ENCODE measurements at regions of chr1 and their contacts with region 1.

Region 1: GRCh38 chr1:116504308-116505156 is 66.3 kb downstream of the CD58 start:
- DNase-seq: peak; percentile 49 to 86 (median 73)
- ATAC-seq: peak; percentile 96
- H3K4me3 ChIP-seq: peak overlapping the region; percentile 1
- H3K4me3 Mint-ChIP-seq: peak overlapping the region in 8 of 10 donors; percentile 11 to 77 (median 48)
- H3K27ac ChIP-seq: peak overlapping the region; percentile 48
- H3K27ac Mint-ChIP-seq: peak overlapping the region; percentile 65 to 92 (median 77)
- H3K4me1 ChIP-seq: peaks cover 20 to 49% of the 10 kb centered on the region in 2 donors
- H3K4me1 Mint-ChIP-seq: peaks cover 21 to 89% (median 34%) of the 10 kb centered on the region in 7 donors
- H3K27me3 ChIP-seq: no peaks in the 10 kb centered on the region
- H3K27me3 Mint-ChIP-seq: no peaks in the 10 kb centered on the region

Region 2: GRCh38 chr1:115642168-115643072 is 862.1 kb before region 1 on chr1:
- CTCF ChIA-PET with region 1: no interaction called
- POLR2A ChIA-PET with region 1: no interaction called
- intact Hi-C with region 1: loop called in 1 of 2 experiments (anchors 10 kb)
- DNase-seq: peak in 3 of 9 donors; percentile 7 to 53 (median 15)
- ATAC-seq: peak; percentile 59
- H3K4me3 ChIP-seq: peak overlapping the region; percentile 47
- H3K4me3 Mint-ChIP-seq: peak overlapping the region; percentile 71 to 88 (median 80)
- H3K27ac ChIP-seq: no peak overlapping the region
- H3K27ac Mint-ChIP-seq: peak overlapping the region in 2 of 9 donors; percentile 32 to 72
- H3K4me1 ChIP-seq: peaks cover 0 to 7% of the 10 kb centered on the region in 2 donors
- H3K4me1 Mint-ChIP-seq: peaks cover 10 to 18% (median 14%) of the 10 kb centered on the region in 7 donors
- H3K27me3 ChIP-seq: peaks cover 0 to 4% of the 10 kb centered on the region in 2 donors
- H3K27me3 Mint-ChIP-seq: peaks cover 20 to 49% (median 35%) of the 10 kb centered on the region in 5 donors

Region 3: DNA sequence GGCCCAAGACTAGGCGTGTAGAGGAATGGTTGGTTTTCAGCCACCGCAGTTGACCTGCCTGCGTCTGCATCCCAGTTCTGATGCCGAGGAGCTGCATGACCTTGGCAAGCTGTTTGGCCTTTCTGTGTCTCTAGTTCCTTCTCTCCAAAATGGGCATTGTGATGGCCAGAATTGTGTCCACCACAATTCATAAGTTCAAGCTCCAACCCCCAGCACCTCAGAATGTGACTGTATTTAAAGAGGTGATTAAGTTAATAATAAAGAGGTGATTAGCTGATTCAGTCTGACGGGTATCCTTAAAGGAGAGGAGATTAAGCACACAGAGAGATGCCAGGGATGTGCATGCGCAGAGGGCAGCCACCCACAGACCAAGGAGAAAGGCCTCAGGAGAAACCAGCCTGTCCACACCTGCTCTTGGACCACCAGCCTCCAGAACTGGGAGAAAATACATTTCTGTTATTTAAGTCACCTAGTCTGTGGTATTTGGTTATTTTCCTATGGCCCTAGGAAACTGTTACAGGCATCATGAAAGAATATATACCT is 364.9 kb before region 1 on chr1:
- CTCF ChIA-PET with region 1: interaction called, 59 read pairs
- POLR2A ChIA-PET with region 1: interaction called, 8 read pairs
- intact Hi-C with region 1: loop called (anchors 1 kb)
- DNase-seq: no peak
- ATAC-seq: no peak
- H3K4me3 ChIP-seq: no peak overlapping the region
- H3K4me3 Mint-ChIP-seq: no peak overlapping the region
- H3K27ac ChIP-seq: no peak overlapping the region
- H3K27ac Mint-ChIP-seq: no peak overlapping the region
- H3K4me1 ChIP-seq: no peaks in the 10 kb centered on the region
- H3K4me1 Mint-ChIP-seq: peaks cover 0 to 10% (median 5%) of the 10 kb centered on the region in 7 donors
- H3K27me3 ChIP-seq: no peaks in the 10 kb centered on the region
- H3K27me3 Mint-ChIP-seq: peaks cover 0 to 26% (median 5%) of the 10 kb centered on the region in 5 donors

Region 4: GRCh38 chr1:116436611-116436970 is 67.9 kb before region 1 on chr1:
- CTCF ChIA-PET with region 1: no interaction called
- POLR2A ChIA-PET with region 1: no interaction called
- intact Hi-C with region 1: no loop called
- DNase-seq: peak in 2 of 9 donors; percentile 27 to 34
- ATAC-seq: no peak
- H3K4me3 ChIP-seq: no peak overlapping the region
- H3K4me3 Mint-ChIP-seq: no peak overlapping the region
- H3K27ac ChIP-seq: no peak overlapping the region
- H3K27ac Mint-ChIP-seq: peak overlapping the region in 2 of 9 donors; percentile 7 to 62
- H3K4me1 ChIP-seq: no peaks in the 10 kb centered on the region
- H3K4me1 Mint-ChIP-seq: peaks cover 0 to 3% (median 0%) of the 10 kb centered on the region in 7 donors
- H3K27me3 ChIP-seq: no peaks in the 10 kb centered on the region
- H3K27me3 Mint-ChIP-seq: peaks cover 0 to 39% (median 0%) of the 10 kb centered on the region in 5 donors

Region 5: GRCh38 chr1:116514708-116515525 is 10.4 kb after region 1 on chr1:
- CTCF ChIA-PET with region 1: interaction called, 7 read pairs
- POLR2A ChIA-PET with region 1: interaction called, 16 read pairs
- intact Hi-C with region 1: loop called (anchors 1 kb)
- DNase-seq: peak in 8 of 9 donors; percentile 11 to 71 (median 30)
- ATAC-seq: peak; percentile 82
- H3K4me3 ChIP-seq: peak overlapping the region; percentile 12
- H3K4me3 Mint-ChIP-seq: peak overlapping the region; percentile 48 to 82 (median 72)
- H3K27ac ChIP-seq: peak overlapping the region; percentile 25
- H3K27ac Mint-ChIP-seq: peak overlapping the region; percentile 66 to 93 (median 88)
- H3K4me1 ChIP-seq: peaks cover 30 to 49% of the 10 kb centered on the region in 2 donors
- H3K4me1 Mint-ChIP-seq: peaks cover 37 to 72% (median 53%) of the 10 kb centered on the region in 7 donors
- H3K27me3 ChIP-seq: no peaks in the 10 kb centered on the region
- H3K27me3 Mint-ChIP-seq: no peaks in the 10 kb centered on the region

Region 6: GRCh38 chr1:116556289-116557006 is 51.9 kb after region 1 on chr1:
- CTCF ChIA-PET with region 1: no interaction called
- POLR2A ChIA-PET with region 1: no interaction called
- intact Hi-C with region 1: loop called (anchors 1 to 2 kb)
- DNase-seq: peak in 1 of 9 donors; percentile 72
- ATAC-seq: peak; percentile 91
- H3K4me3 ChIP-seq: no peak overlapping the region
- H3K4me3 Mint-ChIP-seq: peak overlapping the region in 1 of 10 donors; percentile 33
- H3K27ac ChIP-seq: no peak overlapping the region
- H3K27ac Mint-ChIP-seq: peak overlapping the region in 1 of 9 donors; percentile 70
- H3K4me1 ChIP-seq: peaks cover 0 to 27% of the 10 kb centered on the region in 2 donors
- H3K4me1 Mint-ChIP-seq: peaks cover 0 to 75% (median 18%) of the 10 kb centered on the region in 7 donors
- H3K27me3 ChIP-seq: no peaks in the 10 kb centered on the region
- H3K27me3 Mint-ChIP-seq: no peaks in the 10 kb centered on the region